ENCODE measurements at regions of chr9 and their contacts with region 1.

Region 1: GRCh38 chr9:77751341-77752091 is 103.4 kb upstream of the GNA14 start:
- DNase-seq: no peak
- ATAC-seq: peak; percentile 93
- H3K4me3 Mint-ChIP-seq: no peak overlapping the region
- H3K27ac Mint-ChIP-seq: peak overlapping the region; percentile 64; the same call in 1 of the 2 replicates
- H3K4me1 Mint-ChIP-seq: peaks cover 17% of the 10 kb centered on the region
- H3K27me3 Mint-ChIP-seq: no peaks in the 10 kb centered on the region; the same call in 1 of the 2 replicates
- CTCF ChIP-seq: peak; percentile 27; the same call in 1 of the 2 replicates

Region 2: GRCh38 chr9:77433675-77434445 is 317.7 kb before region 1 on chr9:
- CTCF ChIA-PET with region 1: interaction called, 36 read pairs
- POLR2A ChIA-PET with region 1: no interaction called
- DNase-seq: peak; percentile 66
- ATAC-seq: peak; percentile 92
- H3K4me3 Mint-ChIP-seq: no peak overlapping the region
- H3K27ac Mint-ChIP-seq: 0 out of 2 replicates have a peak overlapping the region, but pooled peaks have one; percentile 8
- H3K4me1 Mint-ChIP-seq: peaks cover 15% of the 10 kb centered on the region
- H3K27me3 Mint-ChIP-seq: no peaks in the 10 kb centered on the region; the same call in 1 of the 2 replicates
- CTCF ChIP-seq: peak; percentile 87

Region 3: DNA sequence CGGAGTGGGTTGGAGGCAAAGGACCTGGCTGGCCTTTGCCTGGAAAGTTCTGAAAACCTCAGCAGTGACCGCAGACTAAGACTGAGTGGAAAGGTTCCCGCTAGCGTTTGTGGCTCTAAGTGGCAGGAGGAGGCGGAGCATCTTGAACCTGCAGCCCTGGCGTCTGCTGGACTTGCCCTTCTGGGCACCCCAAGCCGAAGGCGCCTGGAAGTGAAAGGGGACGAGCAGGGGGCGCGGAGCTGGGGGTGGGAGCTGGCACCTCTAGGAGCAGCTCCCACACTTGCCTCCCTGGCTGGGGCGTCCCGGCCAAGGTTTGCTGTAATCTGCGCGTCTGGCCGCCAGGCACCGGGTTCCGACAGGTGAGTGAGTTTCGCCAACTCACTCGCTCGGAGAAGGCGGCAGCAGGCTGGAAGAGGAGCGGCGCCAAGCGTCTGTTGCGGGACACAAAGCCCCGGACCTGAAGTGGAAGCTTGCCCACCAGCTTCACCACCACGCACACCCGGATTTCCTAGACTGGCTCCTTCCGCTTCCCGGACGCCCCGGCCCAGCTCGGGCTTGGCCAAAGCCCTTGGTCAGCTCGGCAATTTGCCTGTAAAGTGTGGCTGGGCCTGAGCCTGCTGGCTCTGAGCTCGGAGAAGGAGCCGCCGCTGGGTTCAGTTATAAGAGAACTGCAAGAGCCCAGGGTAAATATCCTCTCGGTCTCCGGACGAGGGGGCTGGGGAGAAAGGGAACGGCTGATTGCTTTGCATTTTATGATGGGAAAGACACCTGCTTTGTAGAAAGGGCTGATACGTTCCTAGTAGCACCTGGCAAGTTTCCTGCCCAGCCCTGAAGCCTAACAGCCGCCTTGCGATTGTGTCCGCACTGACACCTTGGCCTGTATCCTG is 103.0 kb before region 1 on chr9 and contains the start of gene GNA14:
- CTCF ChIA-PET with region 1: interaction called, 29 read pairs
- POLR2A ChIA-PET with region 1: no interaction called
- DNase-seq: peak; percentile 75
- ATAC-seq: peak; percentile 59
- H3K4me3 Mint-ChIP-seq: peak within 1 kb of the TSS; percentile 83
- H3K27ac Mint-ChIP-seq: peak within 1 kb of the TSS; percentile 90
- H3K4me1 Mint-ChIP-seq: peaks cover 54% of the 10 kb centered on the region
- H3K27me3 Mint-ChIP-seq: peaks cover 26% of the 10 kb centered on the region
- CTCF ChIP-seq: no peak
- total RNA-seq, gene GNA14: 20.4 to 26.7 TPM (median 21.0 TPM) in 3 replicates

Region 4: DNA sequence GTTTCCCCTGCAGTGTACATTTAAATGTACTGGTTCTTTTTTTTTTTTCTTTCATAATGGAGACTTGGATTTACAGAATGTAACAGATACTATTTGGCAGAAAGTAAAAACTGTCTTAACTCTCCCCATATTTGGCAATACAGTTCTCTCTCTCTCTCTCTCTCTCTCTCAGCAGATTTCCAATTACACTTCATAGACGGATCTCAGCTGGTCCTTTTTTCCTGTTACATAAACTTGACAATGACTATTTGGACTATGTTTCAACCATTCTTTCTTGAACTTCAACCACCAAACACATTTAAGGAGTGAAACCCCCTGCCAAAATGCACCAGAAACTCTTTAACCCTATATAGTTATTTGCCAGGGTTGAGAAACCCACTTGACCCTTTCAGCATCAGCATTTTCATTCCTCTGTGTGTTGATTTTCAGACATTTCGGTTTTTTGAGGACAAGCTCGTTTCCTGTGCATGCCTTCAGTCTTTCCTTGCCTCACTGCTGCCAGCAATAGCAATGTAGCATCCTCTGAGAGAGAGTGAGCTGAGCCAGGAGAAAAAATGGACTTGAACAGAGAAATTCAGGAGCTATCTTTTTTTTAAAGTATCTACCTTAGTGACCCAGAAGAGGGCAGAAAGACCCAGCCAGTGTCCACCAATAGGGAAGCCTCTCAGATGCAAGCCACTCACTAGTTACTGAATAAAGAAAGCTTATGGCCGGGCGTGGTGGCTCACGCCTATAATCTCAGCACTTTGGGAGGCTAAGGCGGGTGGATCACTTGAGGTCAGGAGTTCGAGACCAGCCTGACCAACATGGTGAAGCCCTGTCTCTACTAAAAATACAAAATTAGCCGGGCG is 77.3 kb before region 1 on chr9:
- CTCF ChIA-PET with region 1: interaction called, 24 read pairs
- POLR2A ChIA-PET with region 1: interaction called, 3 read pairs
- DNase-seq: no peak
- ATAC-seq: peak; percentile 78
- H3K4me3 Mint-ChIP-seq: no peak overlapping the region
- H3K27ac Mint-ChIP-seq: no peak overlapping the region
- H3K4me1 Mint-ChIP-seq: no peaks in the 10 kb centered on the region
- H3K27me3 Mint-ChIP-seq: no peaks in the 10 kb centered on the region
- CTCF ChIP-seq: no peak